ENCODE measurements at regions of chr9 and their contacts with region 1.

Region 1: DNA sequence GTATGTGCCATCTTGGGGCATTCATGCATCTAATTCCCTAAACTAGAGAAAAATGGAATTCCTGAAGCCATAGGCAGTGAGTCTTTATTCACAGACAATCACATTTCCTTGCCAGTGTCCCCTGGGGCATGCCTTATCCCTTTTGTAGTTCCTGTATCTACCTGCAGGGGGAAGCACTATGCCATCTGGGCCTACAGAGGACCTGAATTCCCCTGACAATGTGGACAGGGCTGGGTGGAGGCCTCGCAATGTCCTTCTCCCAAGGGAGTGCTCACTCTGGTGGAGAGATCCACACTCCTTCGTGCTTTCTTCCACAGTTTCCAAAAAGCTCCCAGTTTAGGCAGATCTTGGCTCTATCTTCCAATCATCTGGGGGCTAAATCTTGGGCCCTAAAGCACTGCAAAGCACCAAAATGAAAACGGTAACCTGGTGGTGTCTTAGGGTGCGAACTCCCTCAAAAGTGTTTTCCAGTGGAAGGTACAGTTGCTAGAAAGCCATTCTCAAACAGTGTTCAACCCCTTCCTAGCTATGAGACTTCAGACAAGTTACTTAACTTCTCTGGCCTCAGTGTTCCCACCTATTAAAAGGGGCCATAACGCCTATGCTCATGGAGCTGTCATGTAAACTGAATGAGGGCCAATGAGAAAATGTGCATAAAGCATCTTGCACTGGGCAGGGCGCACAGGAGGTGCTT is 17.5 kb downstream of the WHRN start:
- DNase-seq: peak; percentile 77
- H3K4me3 ChIP-seq: no peak overlapping the region
- H3K27ac ChIP-seq: no peak overlapping the region
- H3K4me1 ChIP-seq: no peaks in the 10 kb centered on the region
- H3K27me3 ChIP-seq: no peaks in the 10 kb centered on the region
- CTCF ChIP-seq: peak; percentile 69 to 89 (median 80)
- POLR2A ChIP-seq: no peak

Region 2: GRCh38 chr9:113998525-113999255 is 489.1 kb before region 1 on chr9:
- intact Hi-C with region 1: no loop called
- DNase-seq: no peak
- H3K4me3 ChIP-seq: no peak overlapping the region
- H3K27ac ChIP-seq: no peak overlapping the region
- H3K4me1 ChIP-seq: peaks cover 15% of the 10 kb centered on the region
- H3K27me3 ChIP-seq: no peaks in the 10 kb centered on the region
- CTCF ChIP-seq: no peak
- POLR2A ChIP-seq: no peak

Region 3: GRCh38 chr9:114405294-114406034 is 82.3 kb before region 1 on chr9:
- intact Hi-C with region 1: loop called (anchors 10 kb)
- DNase-seq: peak; percentile 73
- H3K4me3 ChIP-seq: no peak overlapping the region
- H3K27ac ChIP-seq: no peak overlapping the region
- H3K4me1 ChIP-seq: no peaks in the 10 kb centered on the region
- H3K27me3 ChIP-seq: no peaks in the 10 kb centered on the region
- CTCF ChIP-seq: peak; percentile 19 to 82 (median 72)
- POLR2A ChIP-seq: no peak

Region 4: DNA sequence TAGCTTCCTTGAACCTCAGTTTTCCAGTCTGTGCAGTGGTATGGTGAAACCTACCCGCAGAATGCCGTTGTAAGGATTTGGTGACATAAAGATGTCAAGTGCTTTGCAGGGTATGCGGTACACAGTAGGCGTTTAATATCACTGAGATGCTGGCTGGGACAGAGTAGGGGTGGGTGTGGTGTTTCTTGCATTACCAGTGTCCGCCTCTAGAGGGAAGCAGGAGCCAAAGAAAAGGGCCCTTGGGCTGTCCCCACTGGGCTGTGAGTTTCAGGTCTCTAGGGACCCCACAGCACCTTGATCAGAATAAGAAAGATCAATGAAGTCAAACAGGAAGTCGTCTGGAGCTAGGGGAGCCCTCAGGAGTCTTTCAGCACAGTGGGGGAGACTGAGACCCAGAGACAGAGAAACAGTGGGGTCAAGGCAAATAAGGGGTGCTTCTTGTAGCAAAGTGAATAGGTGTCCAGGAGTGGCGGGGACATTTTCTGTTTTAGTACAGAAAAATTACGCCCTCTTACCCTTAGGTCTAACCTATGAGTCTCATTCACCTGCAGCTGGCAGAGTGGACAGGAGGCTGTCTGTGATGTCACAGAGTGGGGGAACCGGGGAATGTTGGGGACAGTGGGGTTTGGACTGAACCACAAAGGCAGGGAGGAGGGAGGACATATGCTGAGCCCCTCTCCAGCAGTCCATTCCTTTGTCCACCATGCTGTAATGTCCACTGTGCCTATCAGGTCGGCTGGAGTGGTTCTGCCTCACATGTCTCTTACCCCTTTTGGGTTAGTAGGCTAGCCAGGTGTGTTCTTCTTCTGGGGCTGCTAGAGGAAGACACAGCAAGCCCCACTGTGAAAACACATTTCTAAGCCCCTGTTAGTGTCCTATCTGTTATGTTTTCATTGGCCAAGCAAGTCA is 174.6 kb after region 1 on chr9:
- intact Hi-C with region 1: no loop called
- DNase-seq: no peak
- H3K4me3 ChIP-seq: no peak overlapping the region
- H3K27ac ChIP-seq: no peak overlapping the region
- H3K4me1 ChIP-seq: no peaks in the 10 kb centered on the region
- H3K27me3 ChIP-seq: no peaks in the 10 kb centered on the region
- CTCF ChIP-seq: peak; percentile 50 to 67 (median 57)
- POLR2A ChIP-seq: no peak